BJ (cell line): ENCODE measurements at regions of chr2 and their contacts with region 1.

Region 1: DNA sequence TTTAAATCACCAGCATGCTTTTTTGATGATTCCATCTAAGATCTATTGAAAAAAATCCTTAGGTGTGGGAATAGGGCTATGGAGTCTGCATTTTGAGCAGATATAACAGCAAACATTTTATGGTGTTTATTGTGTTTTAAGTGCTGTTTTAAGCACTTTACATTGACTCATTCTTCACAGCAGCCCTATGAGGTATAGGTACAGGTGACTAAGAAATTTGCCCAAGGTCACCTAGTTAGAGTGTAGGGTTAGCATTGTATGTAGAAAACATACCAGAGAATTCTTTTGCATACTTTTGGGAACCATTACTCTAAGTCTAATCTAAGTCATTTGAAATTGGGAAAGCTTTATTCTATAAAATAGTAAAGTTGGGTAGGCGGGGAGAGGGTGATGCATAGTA is 31.3 kb downstream of the PPM1B start:
- DNase-seq: no peak
- H3K4me3 ChIP-seq: no peak overlapping the region
- H3K27me3 ChIP-seq: no peaks in the 10 kb centered on the region
- CTCF ChIP-seq: no peak

Region 2: DNA sequence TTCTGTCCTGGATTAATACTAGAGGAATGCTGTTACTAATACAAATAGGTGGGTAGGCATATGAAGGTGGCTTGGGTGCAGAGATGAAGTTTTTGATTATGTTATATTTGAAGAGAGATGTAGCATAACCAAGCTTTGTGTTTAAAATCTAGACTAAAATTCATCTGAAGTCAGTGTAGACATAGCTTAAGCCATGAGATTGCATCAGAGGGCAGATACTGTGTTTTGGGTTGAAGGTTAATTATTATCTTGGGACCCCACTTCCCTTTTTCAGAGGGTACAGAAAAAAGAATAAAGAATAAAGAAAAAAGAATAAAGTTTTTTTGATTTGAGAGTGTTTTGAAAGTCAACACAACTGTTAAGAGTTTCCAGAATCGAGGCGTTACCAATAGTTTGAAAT is 18.4 kb before region 1 on chr2:
- CTCF ChIA-PET with region 1: no interaction called
- POLR2A ChIA-PET with region 1: no interaction called
- DNase-seq: no peak
- H3K4me3 ChIP-seq: no peak overlapping the region
- H3K27me3 ChIP-seq: no peaks in the 10 kb centered on the region
- CTCF ChIP-seq: no peak

Region 3: DNA sequence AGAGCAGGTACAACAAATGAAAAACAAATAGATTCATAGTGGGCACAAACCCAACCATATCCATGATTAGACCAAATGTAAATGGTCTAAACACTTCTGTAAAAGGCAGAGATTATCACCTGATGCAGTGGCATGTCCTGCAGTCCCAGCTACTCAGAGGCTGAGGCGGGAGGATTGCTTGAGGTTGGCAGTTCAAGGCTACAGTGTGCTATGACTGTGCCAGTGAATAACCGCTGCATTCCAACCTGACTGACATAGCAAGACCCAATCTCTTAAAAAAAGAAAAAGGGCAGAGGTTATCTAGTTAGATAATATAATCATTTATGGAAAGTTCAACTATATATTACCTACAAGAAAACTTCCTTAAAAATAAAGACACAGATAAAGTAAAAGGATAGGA is 54.0 kb after region 1 on chr2:
- CTCF ChIA-PET with region 1: no interaction called
- POLR2A ChIA-PET with region 1: interaction called, 18 read pairs
- DNase-seq: no peak
- H3K4me3 ChIP-seq: no peak overlapping the region
- H3K27me3 ChIP-seq: no peaks in the 10 kb centered on the region
- CTCF ChIP-seq: no peak